ENCODE measurements at regions of chr3 and their contacts with region 1.

Region 1: GRCh38 chr3:52291508-52292181 is 4.0 kb downstream of the GLYCTK start:
- DNase-seq: peak in 6 of 9 donors; percentile 42 to 59 (median 49)
- ATAC-seq: peak; percentile 21
- H3K4me3 ChIP-seq: no peak overlapping the region
- H3K4me3 Mint-ChIP-seq: peak overlapping the region in 8 of 10 donors; percentile 1 to 84 (median 30)
- H3K27ac ChIP-seq: no peak overlapping the region
- H3K27ac Mint-ChIP-seq: peak overlapping the region in 4 of 9 donors; percentile 11 to 86 (median 72)
- H3K4me1 ChIP-seq: peaks cover 10 to 22% of the 10 kb centered on the region in 2 donors
- H3K4me1 Mint-ChIP-seq: peaks cover 19 to 36% (median 30%) of the 10 kb centered on the region in 7 donors
- H3K27me3 ChIP-seq: no peaks in the 10 kb centered on the region
- H3K27me3 Mint-ChIP-seq: peaks cover 0 to 3% (median 0%) of the 10 kb centered on the region in 5 donors

Region 2: DNA sequence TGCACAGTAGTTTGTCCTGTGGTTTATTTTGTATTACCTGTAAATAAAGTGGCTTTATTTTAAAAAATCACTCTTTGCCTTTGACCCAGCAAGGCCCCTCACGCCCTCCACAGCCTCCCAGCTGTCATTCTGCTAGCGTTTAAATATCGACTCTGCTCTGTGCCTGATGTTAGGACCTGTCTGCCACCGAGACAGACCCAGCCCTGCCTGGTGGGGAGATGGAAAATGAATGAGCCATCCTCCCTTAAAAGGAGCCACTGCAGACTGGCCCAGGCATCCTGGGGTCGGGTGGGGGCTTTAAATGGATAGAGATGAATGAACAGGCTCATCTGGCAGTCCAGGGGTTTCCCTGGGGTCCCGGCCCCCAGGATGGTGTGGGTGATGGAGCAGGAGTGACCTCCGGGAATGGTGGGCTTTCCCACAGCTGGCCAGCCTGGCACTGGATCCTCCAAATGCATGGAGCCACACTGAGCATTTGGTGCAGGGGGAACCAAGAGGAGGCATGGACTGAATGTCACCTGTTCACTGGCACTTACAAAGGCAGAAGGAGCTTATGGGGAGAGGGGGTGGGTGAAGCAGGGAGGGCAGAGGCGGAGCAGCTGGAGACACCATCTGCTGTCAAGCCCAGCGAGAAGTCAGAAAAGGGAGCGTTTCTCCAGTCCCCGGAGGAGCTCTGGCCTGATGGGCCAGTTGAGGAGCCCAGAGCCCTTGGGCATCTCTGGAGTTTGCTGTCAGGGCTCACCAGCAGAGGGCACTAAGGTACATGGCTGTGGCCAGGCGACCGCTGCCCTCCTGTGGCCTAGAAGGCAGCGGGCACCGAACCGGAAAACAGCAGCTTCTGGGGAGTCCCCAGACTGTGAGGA is 572.9 kb before region 1 on chr3:
- CTCF ChIA-PET with region 1: no interaction called
- POLR2A ChIA-PET with region 1: no interaction called
- intact Hi-C with region 1: no loop called
- DNase-seq: peak in 4 of 9 donors; percentile 6 to 71 (median 16)
- ATAC-seq: peak; percentile 84
- H3K4me3 ChIP-seq: no peak overlapping the region
- H3K4me3 Mint-ChIP-seq: no peak overlapping the region
- H3K27ac ChIP-seq: no peak overlapping the region
- H3K27ac Mint-ChIP-seq: peak overlapping the region in 3 of 9 donors; percentile 17 to 59 (median 18)
- H3K4me1 ChIP-seq: peaks cover 14 to 20% of the 10 kb centered on the region in 2 donors
- H3K4me1 Mint-ChIP-seq: peaks cover 21 to 40% (median 35%) of the 10 kb centered on the region in 7 donors
- H3K27me3 ChIP-seq: no peaks in the 10 kb centered on the region
- H3K27me3 Mint-ChIP-seq: no peaks in the 10 kb centered on the region

Region 3: GRCh38 chr3:52238761-52239701 is 52.6 kb before region 1 on chr3 and contains the start of gene TWF2:
- CTCF ChIA-PET with region 1: interaction called, 4 read pairs
- POLR2A ChIA-PET with region 1: interaction called, 1,418 read pairs
- intact Hi-C with region 1: loop called (anchors 1 kb)
- DNase-seq: peak; percentile 87 to 96 (median 91)
- ATAC-seq: peak; percentile 91
- H3K4me3 ChIP-seq: peak within 1 kb of the TSS; percentile 92
- H3K4me3 Mint-ChIP-seq: peak within 1 kb of the TSS; percentile 86 to 100 (median 96)
- H3K27ac ChIP-seq: peak within 1 kb of the TSS; percentile 95
- H3K27ac Mint-ChIP-seq: peak within 1 kb of the TSS; percentile 83 to 99 (median 97)
- H3K4me1 ChIP-seq: peaks cover 59 to 62% of the 10 kb centered on the region in 2 donors
- H3K4me1 Mint-ChIP-seq: peaks cover 59 to 88% (median 76%) of the 10 kb centered on the region in 7 donors
- H3K27me3 ChIP-seq: no peaks in the 10 kb centered on the region
- H3K27me3 Mint-ChIP-seq: no peaks in the 10 kb centered on the region
- total RNA-seq, gene TWF2: 38.7 to 110 (median 63.7) TPM

Region 4: DNA sequence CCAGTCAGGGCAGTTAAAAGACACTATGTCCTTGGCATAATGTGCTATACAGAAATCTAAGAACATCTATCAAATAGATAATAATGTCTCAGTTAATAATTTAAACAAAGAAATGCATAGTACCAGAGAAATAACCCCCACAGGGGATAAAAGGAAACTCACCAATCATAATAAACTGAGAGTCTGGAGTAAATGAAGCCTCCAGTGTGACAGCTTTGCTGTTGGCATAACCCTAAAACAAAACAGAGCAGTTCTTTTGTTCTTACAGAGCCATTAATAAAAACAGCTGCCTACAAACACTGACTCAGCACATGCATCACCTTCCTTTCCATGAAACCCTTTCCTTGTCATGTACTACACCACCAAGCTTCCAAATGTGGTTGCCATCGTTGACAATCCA is 32.6 kb before region 1 on chr3:
- CTCF ChIA-PET with region 1: no interaction called
- POLR2A ChIA-PET with region 1: interaction called, 1,418 read pairs
- intact Hi-C with region 1: no loop called
- DNase-seq: no peak
- ATAC-seq: no peak
- H3K4me3 ChIP-seq: no peak overlapping the region
- H3K4me3 Mint-ChIP-seq: peak overlapping the region in 5 of 10 donors; percentile 23 to 84 (median 27)
- H3K27ac ChIP-seq: peak overlapping the region; percentile 87
- H3K27ac Mint-ChIP-seq: peak overlapping the region; percentile 75 to 99 (median 92)
- H3K4me1 ChIP-seq: peaks cover 47 to 90% of the 10 kb centered on the region in 2 donors
- H3K4me1 Mint-ChIP-seq: peaks cover 61 to 100% (median 93%) of the 10 kb centered on the region in 7 donors
- H3K27me3 ChIP-seq: no peaks in the 10 kb centered on the region
- H3K27me3 Mint-ChIP-seq: no peaks in the 10 kb centered on the region

Region 5: DNA sequence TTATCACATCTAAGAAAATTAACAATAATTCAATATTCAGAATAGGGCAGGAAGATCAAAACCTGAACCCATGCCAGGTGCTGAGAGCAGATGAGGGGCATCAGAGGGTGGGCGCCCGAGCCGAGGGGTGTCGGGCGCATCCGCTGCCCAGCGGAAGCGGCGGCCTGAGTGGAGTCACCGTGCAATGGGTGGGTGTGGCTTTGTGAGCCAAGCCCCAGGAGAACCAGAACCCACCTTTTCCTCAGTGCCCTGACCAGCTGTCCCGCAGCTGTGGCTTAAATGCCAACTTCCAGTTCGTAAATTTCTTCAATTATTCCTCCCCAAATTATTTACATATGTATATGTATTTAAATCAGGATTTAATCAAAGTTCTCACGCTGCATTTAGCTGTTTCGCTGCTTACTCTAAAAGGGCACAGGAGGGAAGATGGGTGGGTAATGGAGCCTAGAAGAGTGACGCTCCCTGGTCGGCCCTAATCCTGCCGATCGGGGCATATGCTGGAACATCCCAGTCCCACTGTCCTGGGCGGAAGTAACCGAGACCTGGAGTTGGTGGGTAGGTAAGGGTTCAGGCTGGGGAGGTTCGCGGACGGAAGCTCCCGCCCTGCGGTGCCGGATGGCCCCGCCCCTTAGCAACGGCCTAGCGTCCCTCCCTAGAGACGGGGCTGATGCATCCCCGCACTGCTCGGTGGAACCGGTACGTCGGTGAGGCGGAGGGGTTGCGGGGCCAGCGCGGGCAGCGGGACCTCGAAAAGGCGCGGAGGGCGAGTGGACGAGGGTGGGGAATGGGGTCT is 25.8 kb after region 1 on chr3:
- CTCF ChIA-PET with region 1: no interaction called
- POLR2A ChIA-PET with region 1: interaction called, 4 read pairs
- intact Hi-C with region 1: loop called in 1 of 2 experiments (anchors 1 kb)
- DNase-seq: peak; percentile 61 to 78 (median 74)
- ATAC-seq: peak; percentile 92
- H3K4me3 ChIP-seq: peak overlapping the region; percentile 46
- H3K4me3 Mint-ChIP-seq: peak overlapping the region; percentile 68 to 84 (median 76)
- H3K27ac ChIP-seq: peak overlapping the region; percentile 17
- H3K27ac Mint-ChIP-seq: peak overlapping the region in 8 of 9 donors; percentile 38 to 80 (median 66)
- H3K4me1 ChIP-seq: peaks cover 9 to 11% of the 10 kb centered on the region in 2 donors
- H3K4me1 Mint-ChIP-seq: peaks cover 0 to 22% (median 17%) of the 10 kb centered on the region in 7 donors
- H3K27me3 ChIP-seq: no peaks in the 10 kb centered on the region
- H3K27me3 Mint-ChIP-seq: no peaks in the 10 kb centered on the region

Region 6: GRCh38 chr3:52350416-52350815 is 58.8 kb after region 1 on chr3:
- CTCF ChIA-PET with region 1: no interaction called
- POLR2A ChIA-PET with region 1: no interaction called
- intact Hi-C with region 1: no loop called
- DNase-seq: no peak
- ATAC-seq: no peak
- H3K4me3 ChIP-seq: no peak overlapping the region
- H3K4me3 Mint-ChIP-seq: no peak overlapping the region
- H3K27ac ChIP-seq: no peak overlapping the region
- H3K27ac Mint-ChIP-seq: no peak overlapping the region
- H3K4me1 ChIP-seq: no peaks in the 10 kb centered on the region
- H3K4me1 Mint-ChIP-seq: no peaks in the 10 kb centered on the region
- H3K27me3 ChIP-seq: no peaks in the 10 kb centered on the region
- H3K27me3 Mint-ChIP-seq: no peaks in the 10 kb centered on the region

Region 7: GRCh38 chr3:52873433-52874159 is 582.0 kb after region 1 on chr3:
- CTCF ChIA-PET with region 1: no interaction called
- POLR2A ChIA-PET with region 1: no interaction called
- intact Hi-C with region 1: no loop called
- DNase-seq: no peak
- ATAC-seq: no peak
- H3K4me3 ChIP-seq: no peak overlapping the region
- H3K4me3 Mint-ChIP-seq: no peak overlapping the region
- H3K27ac ChIP-seq: no peak overlapping the region
- H3K27ac Mint-ChIP-seq: peak overlapping the region in 1 of 9 donors; percentile 33
- H3K4me1 ChIP-seq: peaks cover 0 to 3% of the 10 kb centered on the region in 2 donors
- H3K4me1 Mint-ChIP-seq: peaks cover 23 to 38% (median 35%) of the 10 kb centered on the region in 7 donors
- H3K27me3 ChIP-seq: no peaks in the 10 kb centered on the region
- H3K27me3 Mint-ChIP-seq: no peaks in the 10 kb centered on the region